Heart right ventricle (tissue), 16 donors: ENCODE measurements at regions of chr14 and their contacts with region 1.

Region 1: DNA sequence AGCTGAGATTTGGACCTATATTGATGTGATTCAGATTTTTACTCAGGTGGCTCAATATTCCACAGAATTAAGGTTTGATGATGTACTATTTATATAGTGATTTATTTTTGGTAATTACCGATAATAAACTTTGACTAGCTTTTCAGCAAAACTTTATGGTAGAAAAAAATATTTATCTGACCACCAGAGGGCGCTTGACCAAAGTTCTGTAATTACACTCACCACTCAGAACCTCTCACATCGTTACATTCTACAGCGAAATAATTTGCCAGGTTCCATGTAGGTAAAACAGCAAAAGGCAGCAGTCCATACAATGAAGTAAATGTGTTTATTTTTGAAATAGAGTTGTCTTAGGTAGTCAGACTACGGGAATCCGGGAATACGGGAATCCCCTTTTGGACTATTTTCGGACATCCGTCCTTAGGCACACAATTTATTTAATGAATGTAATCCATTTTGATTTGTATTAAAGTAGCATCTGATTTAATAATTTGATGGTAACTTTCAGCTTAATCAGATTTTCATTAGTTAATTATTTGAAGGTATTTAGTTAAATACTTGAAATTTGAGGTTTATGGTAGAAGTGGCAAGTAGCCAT is 143.0 kb upstream of the DDHD1 start:
- DNase-seq: peak in 1 of 2 donors; percentile 29
- ATAC-seq: peak in 1 of 8 donors; percentile 35
- H3K4me3 ChIP-seq: no peak overlapping the region
- H3K27ac ChIP-seq: no peak overlapping the region
- H3K4me1 ChIP-seq: no peaks in the 10 kb centered on the region
- H3K27me3 ChIP-seq: no peaks in the 10 kb centered on the region
- CTCF ChIP-seq: peak; percentile 57 to 84 (median 76)

Region 2: DNA sequence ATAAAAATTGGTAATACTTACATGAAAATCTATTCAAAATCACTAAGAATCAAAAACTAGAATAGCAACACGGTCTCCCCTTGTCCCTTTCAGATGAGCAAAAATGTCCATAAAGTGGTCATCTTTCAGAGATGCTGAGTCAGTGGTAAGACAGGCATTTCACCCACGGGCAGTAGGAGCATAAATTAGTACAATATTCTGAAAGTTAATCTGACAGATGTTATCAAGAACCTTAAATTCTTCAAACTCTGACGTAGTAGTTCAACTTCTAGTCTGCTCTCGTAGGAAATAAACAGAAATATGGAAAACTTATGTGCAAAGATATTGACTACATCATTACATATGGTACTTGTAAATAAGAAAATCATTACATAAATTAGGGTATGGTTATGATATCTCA is 471.6 kb before region 1 on chr14:
- intact Hi-C with region 1: loop called in 5 of 10 experiments (anchors 10 kb)
- DNase-seq: no peak
- ATAC-seq: no peak
- H3K4me3 ChIP-seq: no peak overlapping the region
- H3K27ac ChIP-seq: no peak overlapping the region
- H3K4me1 ChIP-seq: peaks cover 0 to 9% (median 0%) of the 10 kb centered on the region in 9 donors
- H3K27me3 ChIP-seq: no peaks in the 10 kb centered on the region
- CTCF ChIP-seq: no peak

Region 3: DNA sequence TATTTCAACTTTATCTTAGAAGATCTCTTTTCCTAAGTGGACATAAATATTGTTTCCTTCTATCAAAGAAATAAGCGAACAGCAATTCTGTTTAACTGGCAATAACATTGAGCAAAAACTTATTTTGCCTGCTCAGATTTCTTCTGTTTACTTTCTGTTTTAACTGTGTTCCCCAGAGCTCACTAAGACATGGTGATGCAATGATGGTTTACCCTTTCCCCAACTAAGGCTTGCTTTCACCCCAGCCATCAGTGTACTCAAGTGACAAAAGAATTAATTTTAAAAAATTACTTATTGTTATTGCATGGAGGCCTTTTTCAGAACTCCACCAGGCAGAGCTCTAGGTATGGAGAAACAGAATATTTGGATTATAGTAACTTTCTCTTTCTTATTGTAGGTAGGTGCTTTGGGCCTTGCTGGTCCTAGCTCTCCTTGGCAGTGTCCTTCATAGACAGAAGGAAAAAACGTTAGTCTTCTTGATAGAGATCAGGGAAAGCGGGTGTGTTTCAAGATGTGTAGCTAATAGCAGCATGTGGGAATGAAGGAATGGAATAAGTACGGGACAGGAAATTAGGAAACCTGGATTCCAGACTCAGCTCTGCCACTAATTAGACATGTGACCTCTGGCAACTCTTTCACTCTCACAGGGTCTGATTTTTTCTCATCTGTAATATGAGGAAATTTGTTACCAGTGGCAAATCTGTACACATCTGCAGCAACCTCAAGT is 128.3 kb before region 1 on chr14:
- intact Hi-C with region 1: loop called in 1 of 10 experiments (anchors 10 kb)
- DNase-seq: no peak
- ATAC-seq: peak in 4 of 8 donors; percentile 28 to 58 (median 49)
- H3K4me3 ChIP-seq: no peak overlapping the region
- H3K27ac ChIP-seq: peak overlapping the region in 3 of 10 donors; percentile 10 to 61 (median 59)
- H3K4me1 ChIP-seq: peaks cover 0 to 9% (median 0%) of the 10 kb centered on the region in 9 donors
- H3K27me3 ChIP-seq: no peaks in the 10 kb centered on the region
- CTCF ChIP-seq: no peak

Region 4: GRCh38 chr14:54347997-54348611 is 1052.0 kb after region 1 on chr14:
- intact Hi-C with region 1: loop called in 9 of 10 experiments (anchors 2 to 10 kb)
- DNase-seq: peak in 1 of 2 donors; percentile 32
- ATAC-seq: peak in 6 of 8 donors; percentile 41 to 57 (median 50)
- H3K4me3 ChIP-seq: no peak overlapping the region
- H3K27ac ChIP-seq: peak overlapping the region in 4 of 10 donors; percentile 66 to 83 (median 80)
- H3K4me1 ChIP-seq: peaks cover 0 to 27% (median 21%) of the 10 kb centered on the region in 9 donors
- H3K27me3 ChIP-seq: no peaks in the 10 kb centered on the region
- CTCF ChIP-seq: peak; percentile 55 to 89 (median 75)